ENCODE measurements at regions of chr9 and their contacts with region 1.

Region 1: DNA sequence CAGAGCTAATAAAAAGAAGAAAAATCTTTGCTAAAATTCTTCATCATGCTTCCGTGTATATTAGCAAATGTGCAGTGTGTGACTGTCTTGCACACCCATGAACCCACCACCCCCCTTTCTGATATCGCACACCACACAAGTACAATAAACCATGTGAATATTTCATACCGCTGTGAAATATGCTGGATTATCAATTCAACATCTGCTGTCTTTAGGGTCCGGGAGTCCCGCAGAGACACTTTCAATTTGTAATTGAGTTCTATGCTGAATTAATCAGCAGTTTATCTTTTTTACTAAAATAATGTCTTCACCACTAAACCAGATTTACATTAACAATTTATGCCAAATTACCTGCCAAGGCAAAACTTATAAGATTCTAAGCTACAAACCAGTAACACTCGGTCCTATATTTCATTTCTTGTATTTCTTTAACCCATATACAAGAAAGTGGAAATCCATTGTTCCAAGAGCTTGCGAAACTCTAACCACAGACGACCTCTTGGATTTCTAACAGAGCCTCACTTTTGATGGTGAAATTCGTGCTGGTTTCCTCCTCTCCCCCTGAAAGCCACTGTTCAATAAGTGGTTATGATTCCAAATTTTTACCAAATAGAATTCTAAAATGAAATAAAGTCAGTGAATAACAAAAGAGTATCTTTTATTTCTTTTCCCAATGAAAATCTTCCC is 44.2 kb downstream of the PSMB7 start:
- DNase-seq: peak; percentile 30
- ATAC-seq: no peak
- H3K4me3 ChIP-seq: no peak overlapping the region
- H3K27ac ChIP-seq: peak overlapping the region; percentile 19
- H3K4me1 ChIP-seq: peaks cover 42% of the 10 kb centered on the region
- H3K27me3 ChIP-seq: no peaks in the 10 kb centered on the region
- CTCF ChIP-seq: no peak
- EP300 ChIP-seq: no peak
- POLR2A ChIP-seq: no peak
- RAD21 ChIP-seq: no peak

Region 2: GRCh38 chr9:124357721-124358361 is 13.2 kb before region 1 on chr9:
- CTCF ChIA-PET with region 1: no interaction called
- POLR2A ChIA-PET with region 1: no interaction called
- in situ Hi-C with region 1: no loop called
- intact Hi-C with region 1: no loop called
- DNase-seq: no peak
- ATAC-seq: peak; percentile 28
- H3K4me3 ChIP-seq: no peak overlapping the region
- H3K27ac ChIP-seq: peak overlapping the region; percentile 17
- H3K4me1 ChIP-seq: peaks cover 20% of the 10 kb centered on the region
- H3K27me3 ChIP-seq: no peaks in the 10 kb centered on the region
- CTCF ChIP-seq: peak; percentile 50
- EP300 ChIP-seq: no peak
- POLR2A ChIP-seq: peak in 1 of 2 experiments; percentile 32; a peak in 1 of 4 replicates
- RAD21 ChIP-seq: no peak

Region 3: DNA sequence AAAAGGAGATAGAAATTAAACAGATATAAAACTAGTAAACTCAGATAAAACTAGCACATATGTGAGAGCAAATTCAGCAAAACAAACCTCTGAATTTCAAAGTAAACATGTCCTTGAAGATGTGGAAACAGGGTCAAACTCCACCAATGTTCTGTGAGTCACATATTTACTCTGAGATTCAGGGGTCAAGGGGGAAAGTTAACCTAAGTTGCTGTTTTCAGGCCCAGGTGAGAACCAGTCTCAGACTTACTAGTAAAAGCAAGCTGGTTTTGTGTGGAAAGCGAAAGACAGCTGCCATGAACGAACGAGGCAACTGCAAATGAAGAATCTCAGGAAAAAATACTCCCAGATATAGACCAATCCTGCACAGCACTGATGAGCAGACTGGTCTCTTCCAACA is 15.2 kb after region 1 on chr9:
- CTCF ChIA-PET with region 1: no interaction called
- POLR2A ChIA-PET with region 1: no interaction called
- in situ Hi-C with region 1: no loop called
- intact Hi-C with region 1: loop called (anchors 2 kb)
- DNase-seq: peak; percentile 96
- ATAC-seq: peak; percentile 79
- H3K4me3 ChIP-seq: peak overlapping the region; percentile 33 to 59 (median 43); a peak in 5 of 6 replicates
- H3K27ac ChIP-seq: peak overlapping the region; percentile 97
- H3K4me1 ChIP-seq: peaks cover 87% of the 10 kb centered on the region
- H3K27me3 ChIP-seq: no peaks in the 10 kb centered on the region
- CTCF ChIP-seq: 0 out of 2 replicates have a peak, but pooled peaks have one; percentile 6
- EP300 ChIP-seq: peak; percentile 97 to 99
- POLR2A ChIP-seq: peak in 1 of 2 experiments; percentile 28; a peak in 1 of 4 replicates
- RAD21 ChIP-seq: no peak